Dorsolateral prefrontal cortex (tissue), 120 donors: ENCODE measurements at regions of chr6 and their contacts with region 1.

Region 1: GRCh38 chr6:35468181-35468979 is at the start of gene RPL10A:
- DNase-seq: peak; percentile 90 to 97 (median 96)
- H3K4me3 ChIP-seq: peak within 1 kb of the TSS; percentile 58 to 97 (median 79)
- H3K27ac ChIP-seq: peak within 1 kb of the TSS; percentile 49 to 97 (median 87)
- H3K27me3 ChIP-seq: no peaks in the 10 kb centered on the region
- CTCF ChIP-seq: peak; percentile 83 to 99 (median 94)
- total RNA-seq, gene RPL10A: 245 to 522 (median 369) TPM

Region 2: DNA sequence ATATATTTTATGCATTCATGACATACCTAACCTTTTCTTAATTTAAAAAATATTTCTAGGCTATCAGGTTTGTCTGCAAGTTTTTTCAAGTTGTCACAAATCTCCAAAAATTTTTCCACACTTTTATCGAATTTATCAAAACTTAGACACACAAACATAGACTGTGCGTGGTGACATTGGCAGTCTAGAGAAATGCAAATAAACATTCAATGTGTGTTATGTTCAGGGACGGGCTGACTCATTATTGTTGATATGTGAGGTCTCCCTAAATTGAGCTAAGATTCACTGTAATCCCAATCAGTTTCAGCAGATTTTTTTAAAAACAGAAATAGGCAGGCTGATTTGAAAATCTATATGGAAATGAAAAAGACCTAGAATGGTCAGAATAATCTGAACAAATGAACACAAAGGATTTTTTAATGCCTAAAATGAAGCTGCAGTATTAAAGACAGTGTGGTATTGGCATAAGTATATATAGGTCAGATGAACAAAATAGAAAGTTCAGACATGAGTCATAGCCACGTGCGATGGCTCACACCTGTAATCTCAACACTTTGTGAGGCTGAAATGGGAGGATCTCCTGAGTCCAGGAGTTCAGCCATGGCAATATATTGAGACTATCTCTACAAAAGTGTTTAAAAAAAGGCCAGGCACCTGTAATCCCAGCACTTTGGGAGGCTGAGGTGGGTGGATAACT is 657.3 kb before region 1 on chr6:
- intact Hi-C with region 1: no loop called
- DNase-seq: no peak
- H3K4me3 ChIP-seq: no peak overlapping the region
- H3K27ac ChIP-seq: no peak overlapping the region
- H3K27me3 ChIP-seq: no peaks in the 10 kb centered on the region
- CTCF ChIP-seq: no peak

Region 3: DNA sequence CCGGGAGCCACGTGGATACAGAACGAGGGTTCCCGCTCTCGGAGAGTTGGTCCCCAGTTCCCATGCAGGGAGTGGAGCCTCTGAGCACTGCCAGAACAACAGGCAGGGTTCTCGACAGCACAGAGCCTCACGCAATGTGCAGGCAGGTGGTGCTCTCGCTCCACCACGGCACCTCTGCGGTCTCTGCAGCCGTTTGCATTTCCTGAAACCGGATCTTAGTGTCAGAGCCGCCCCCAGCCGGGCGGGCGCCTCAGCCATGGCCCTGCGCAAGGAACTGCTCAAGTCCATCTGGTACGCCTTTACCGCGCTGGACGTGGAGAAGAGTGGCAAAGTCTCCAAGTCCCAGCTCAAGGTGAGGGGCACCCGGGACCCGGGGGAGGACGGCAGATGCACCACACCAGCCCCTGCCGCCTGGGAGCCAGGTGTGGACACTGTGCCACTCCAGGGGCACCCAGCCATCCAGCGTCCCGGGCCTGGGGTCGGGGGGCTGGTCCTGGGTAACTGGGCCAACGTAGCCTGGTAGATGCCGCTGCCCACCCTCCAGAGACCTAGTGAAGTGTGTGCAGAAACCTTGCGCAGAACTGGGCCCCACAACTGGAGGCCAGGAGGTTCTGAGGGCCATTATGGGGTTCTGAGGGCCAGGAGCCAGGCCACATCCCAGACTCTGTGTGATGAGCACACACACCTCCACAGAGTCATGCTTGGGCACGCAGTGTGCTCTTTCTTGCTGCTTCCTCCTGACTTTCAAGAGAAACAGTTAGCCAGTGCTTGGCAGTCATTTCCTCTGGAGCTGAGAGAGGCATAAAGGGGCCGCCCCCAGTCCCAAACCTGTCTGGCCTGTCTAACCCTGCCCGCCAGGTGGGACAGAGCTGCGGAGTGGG is 170.5 kb before region 1 on chr6 and contains the start of gene DEF6:
- intact Hi-C with region 1: loop called in 1 of 2 experiments (anchors 5 kb)
- DNase-seq: peak in 7 of 10 donors; percentile 22 to 60 (median 51)
- H3K4me3 ChIP-seq: peak within 1 kb of the TSS in 51 of 59 donors; percentile 5 to 59 (median 37)
- H3K27ac ChIP-seq: peak within 1 kb of the TSS in 43 of 59 donors; percentile 4 to 78 (median 47)
- H3K27me3 ChIP-seq: no peaks in the 10 kb centered on the region
- CTCF ChIP-seq: peak in 51 of 56 donors; percentile 27 to 72 (median 49)
- total RNA-seq, gene DEF6: 1.6 to 10.2 (median 4.8) TPM

Region 4: DNA sequence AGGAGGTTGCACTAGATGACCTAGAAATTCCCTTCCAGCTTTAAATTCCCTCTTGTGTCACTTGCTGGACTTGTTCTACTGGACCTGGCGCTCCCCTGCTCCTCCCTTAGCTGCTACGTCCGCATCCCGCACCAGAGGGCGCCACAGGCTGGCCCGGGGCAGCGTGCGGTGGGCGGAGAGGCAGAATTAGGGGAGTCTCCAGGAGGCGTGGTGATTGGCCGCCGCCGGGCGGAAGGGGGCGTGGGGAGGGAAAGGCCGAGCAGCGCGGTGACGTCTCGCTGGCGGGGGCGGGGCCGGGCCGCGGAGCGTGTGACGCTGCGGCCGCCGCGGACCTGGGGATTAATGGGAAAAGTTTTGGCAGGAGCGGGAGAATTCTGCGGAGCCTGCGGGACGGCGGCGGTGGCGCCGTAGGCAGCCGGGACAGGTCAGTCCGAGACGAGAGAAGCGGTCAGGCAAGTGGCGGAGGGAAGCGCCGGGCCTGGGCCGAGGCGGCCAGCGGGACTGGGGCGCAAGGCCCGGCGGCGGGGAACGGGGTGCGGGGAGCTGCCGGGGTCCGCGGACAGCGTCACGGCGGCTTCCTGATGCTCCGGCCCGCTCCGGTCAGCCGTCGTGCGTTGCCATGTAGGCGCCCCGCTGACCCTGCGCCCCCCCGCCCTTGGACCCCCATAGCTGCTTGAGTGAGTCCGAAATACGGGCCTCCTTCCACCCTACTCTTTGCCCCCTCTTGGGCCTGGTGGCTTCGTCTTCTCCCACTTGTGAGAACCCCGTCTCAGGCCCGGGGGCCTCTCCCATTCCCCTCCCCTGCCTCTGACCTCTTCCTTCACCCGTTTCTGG is 125.9 kb before region 1 on chr6 and contains the start of gene PPARD:
- intact Hi-C with region 1: loop called (anchors 1 kb)
- DNase-seq: peak; percentile 96 to 100 (median 98)
- H3K4me3 ChIP-seq: peak within 1 kb of the TSS; percentile 70 to 99 (median 92)
- H3K27ac ChIP-seq: peak within 1 kb of the TSS in 57 of 59 donors; percentile 40 to 97 (median 87)
- H3K27me3 ChIP-seq: no peaks in the 10 kb centered on the region
- CTCF ChIP-seq: peak; percentile 90 to 100 (median 99)
- total RNA-seq, gene PPARD: 26.8 to 49.1 (median 36.9) TPM

Region 5: GRCh38 chr6:35415065-35415991 is 53.1 kb before region 1 on chr6:
- intact Hi-C with region 1: loop called in 1 of 2 experiments (anchors 1 kb)
- DNase-seq: peak; percentile 80 to 95 (median 91)
- H3K4me3 ChIP-seq: peak overlapping the region in 2 of 59 donors; percentile 20 to 35
- H3K27ac ChIP-seq: peak overlapping the region in 57 of 59 donors; percentile 21 to 89 (median 76)
- H3K27me3 ChIP-seq: no peaks in the 10 kb centered on the region
- CTCF ChIP-seq: peak; percentile 67 to 95 (median 86)

Region 6: DNA sequence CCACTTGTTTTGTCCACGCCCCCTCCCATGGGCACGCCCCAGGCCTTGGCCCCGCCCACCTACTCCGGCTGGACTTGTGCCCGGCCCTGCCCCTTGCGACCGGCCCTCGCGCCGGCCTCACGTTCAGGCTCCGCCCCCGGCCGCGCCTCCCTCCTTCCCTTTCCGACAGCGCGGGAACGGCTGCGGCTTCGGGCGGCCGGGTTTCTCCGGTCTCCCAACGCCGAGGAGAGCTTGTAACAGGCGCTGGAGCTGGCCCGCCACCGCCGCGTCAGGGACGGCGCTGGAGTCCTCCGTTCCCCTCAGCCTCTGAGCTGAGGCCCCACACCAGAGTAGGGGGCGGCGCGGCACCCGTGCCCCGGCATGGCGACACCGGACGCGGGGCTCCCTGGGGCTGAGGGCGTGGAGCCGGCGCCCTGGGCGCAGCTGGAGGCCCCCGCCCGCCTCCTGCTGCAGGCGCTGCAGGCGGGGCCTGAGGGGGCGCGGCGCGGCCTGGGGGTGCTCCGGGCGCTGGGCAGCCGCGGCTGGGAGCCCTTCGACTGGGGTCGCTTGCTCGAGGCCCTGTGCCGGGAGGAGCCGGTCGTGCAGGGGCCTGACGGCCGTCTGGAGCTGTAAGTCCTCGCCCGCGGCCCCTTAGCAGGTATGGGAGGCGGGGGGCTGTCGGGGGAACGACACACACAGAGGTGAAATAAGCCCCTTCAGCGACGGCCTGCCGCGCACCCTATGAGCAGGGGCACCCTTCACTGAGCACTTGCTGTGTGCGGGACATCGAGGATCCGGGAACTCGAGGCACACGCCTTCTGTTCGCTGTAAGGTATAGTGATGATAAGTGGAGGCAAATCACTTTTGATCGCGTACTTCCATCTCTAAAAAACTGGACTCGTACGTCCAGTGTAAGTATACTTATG is 15.9 kb before region 1 on chr6 and contains the start of gene FANCE:
- intact Hi-C with region 1: loop called (anchors 1 to 2 kb)
- DNase-seq: peak; percentile 86 to 94 (median 90)
- H3K4me3 ChIP-seq: peak within 1 kb of the TSS; percentile 52 to 86 (median 73)
- H3K27ac ChIP-seq: peak within 1 kb of the TSS in 44 of 59 donors; percentile 1 to 85 (median 66)
- H3K27me3 ChIP-seq: no peaks in the 10 kb centered on the region
- CTCF ChIP-seq: peak in 30 of 56 donors; percentile 11 to 55 (median 31)
- total RNA-seq, gene FANCE: 1.8 to 5.5 (median 3.2) TPM

Region 7: DNA sequence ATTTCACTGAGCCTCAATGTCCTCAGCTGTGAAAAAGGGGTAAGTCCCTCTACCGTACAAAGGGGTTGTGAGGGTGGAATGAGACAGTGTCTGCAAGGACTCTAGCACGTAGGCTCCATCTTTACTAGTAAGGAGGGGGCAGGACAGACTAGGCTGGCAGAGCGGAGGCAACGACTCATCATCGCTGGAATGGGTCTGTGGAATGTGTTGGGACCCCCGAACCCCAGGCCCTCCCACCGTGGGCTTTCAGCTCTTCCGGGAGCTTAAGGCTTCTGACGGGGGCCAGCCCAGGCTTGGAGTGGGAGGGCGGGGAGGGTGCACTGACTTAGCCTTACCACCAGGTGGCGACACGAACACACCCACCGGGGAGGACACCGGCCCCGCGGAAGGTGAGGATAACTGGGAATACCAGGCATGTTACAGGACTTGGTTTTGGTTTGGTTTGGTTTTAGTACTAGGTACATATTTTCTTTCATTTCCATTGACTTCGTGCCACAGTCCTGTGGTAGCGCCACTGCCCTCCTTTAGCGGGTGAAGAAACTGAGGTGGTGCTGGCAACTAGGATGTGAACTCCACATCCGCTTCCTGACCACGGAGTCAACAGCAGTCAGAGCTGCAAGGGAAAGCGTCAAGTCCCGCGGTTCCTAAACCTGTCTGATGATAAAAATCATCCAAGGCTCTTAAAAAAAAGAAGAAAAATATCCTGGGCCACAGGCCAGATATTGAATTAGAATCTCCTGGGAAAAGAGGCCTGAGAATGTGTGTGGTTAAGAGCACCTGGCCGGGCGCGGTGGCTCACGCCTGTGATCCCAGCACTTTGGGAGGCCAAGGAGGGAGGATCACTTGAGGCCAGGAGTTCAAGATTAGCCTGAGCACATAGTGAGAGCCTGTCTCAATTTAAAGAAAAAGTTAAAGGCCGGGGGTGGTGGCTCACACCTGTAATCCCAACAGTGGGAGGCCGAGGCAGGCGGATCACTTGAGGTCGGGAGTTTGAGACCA is 54.6 kb after region 1 on chr6:
- intact Hi-C with region 1: no loop called
- DNase-seq: peak; percentile 29 to 72 (median 61)
- H3K4me3 ChIP-seq: peak overlapping the region in 15 of 59 donors; percentile 13 to 45 (median 28)
- H3K27ac ChIP-seq: no peak overlapping the region
- H3K27me3 ChIP-seq: no peaks in the 10 kb centered on the region
- CTCF ChIP-seq: peak; percentile 84 to 100 (median 98)